Gastrocnemius medialis (tissue), 4 donors: ENCODE measurements at regions of chr17 and their contacts with region 1.

Region 1: GRCh38 chr17:79844869-79845600 is 5.8 kb upstream of the CBX4 start:
- DNase-seq: no peak
- ATAC-seq: no peak
- H3K4me3 ChIP-seq: peak overlapping the region; percentile 59 to 84 (median 62)
- H3K27ac ChIP-seq: no peak overlapping the region
- H3K4me1 ChIP-seq: peaks cover 17 to 35% of the 10 kb centered on the region in 2 donors
- H3K27me3 ChIP-seq: peaks cover 48 to 78% (median 49%) of the 10 kb centered on the region in 3 donors
- CTCF ChIP-seq: peak in 4 of 5 experiments; percentile 12 to 86 (median 64)
- POLR2A ChIP-seq: no peak

Region 2: GRCh38 chr17:79923974-79924638 is 79.1 kb after region 1 on chr17:
- in situ Hi-C with region 1: no loop called
- intact Hi-C with region 1: loop called (anchors 2 kb)
- DNase-seq: no peak
- ATAC-seq: no peak
- H3K4me3 ChIP-seq: no peak overlapping the region
- H3K27ac ChIP-seq: no peak overlapping the region
- H3K4me1 ChIP-seq: peaks cover 13 to 21% of the 10 kb centered on the region in 2 donors
- H3K27me3 ChIP-seq: peaks cover 39 to 52% (median 45%) of the 10 kb centered on the region in 3 donors
- CTCF ChIP-seq: no peak
- POLR2A ChIP-seq: no peak